Mucosa of descending colon (tissue), 3 donors: ENCODE measurements at regions of chr17 and their contacts with region 1.

Region 1: DNA sequence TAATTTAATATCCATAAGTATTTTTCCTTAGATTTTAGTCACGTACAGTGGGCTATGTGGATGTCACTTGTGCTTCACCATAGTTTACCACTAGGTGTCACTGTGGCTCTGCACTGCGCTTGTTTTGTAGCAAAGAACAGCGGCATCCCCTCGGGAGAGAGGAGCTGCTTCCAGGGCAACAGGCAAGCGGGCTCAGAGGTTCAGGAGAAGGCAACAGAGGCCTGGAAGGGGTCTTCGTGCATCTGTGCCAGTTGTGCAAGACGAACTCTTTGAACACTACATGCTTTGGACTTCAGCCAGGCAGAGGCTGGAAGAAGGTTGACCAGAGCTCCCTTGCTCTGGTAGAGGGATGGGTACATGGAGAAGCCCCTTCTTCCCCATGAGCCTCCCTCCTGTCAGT is 20.6 kb downstream of the CYB561 start:
- DNase-seq: peak; percentile 56 to 86 (median 63)
- ATAC-seq: peak; percentile 90
- H3K4me3 ChIP-seq: no peak overlapping the region
- H3K4me1 ChIP-seq: no peaks in the 10 kb centered on the region
- CTCF ChIP-seq: peak; percentile 69

Region 2: GRCh38 chr17:63464691-63465236 is 39.3 kb after region 1 on chr17:
- intact Hi-C with region 1: no loop called
- DNase-seq: no peak
- ATAC-seq: no peak
- H3K4me3 ChIP-seq: no peak overlapping the region
- H3K4me1 ChIP-seq: no peaks in the 10 kb centered on the region
- CTCF ChIP-seq: no peak

Region 3: GRCh38 chr17:63478791-63479494 is 53.5 kb after region 1 on chr17:
- intact Hi-C with region 1: loop called (anchors 5 kb)
- DNase-seq: peak; percentile 85 to 91 (median 88)
- ATAC-seq: peak; percentile 82
- H3K4me3 ChIP-seq: no peak overlapping the region
- H3K4me1 ChIP-seq: peaks cover 28% of the 10 kb centered on the region
- CTCF ChIP-seq: peak; percentile 78

Region 4: GRCh38 chr17:63609816-63610573 is 184.5 kb after region 1 on chr17:
- intact Hi-C with region 1: loop called (anchors 5 kb)
- DNase-seq: no peak
- ATAC-seq: no peak
- H3K4me3 ChIP-seq: no peak overlapping the region
- H3K4me1 ChIP-seq: no peaks in the 10 kb centered on the region
- CTCF ChIP-seq: no peak